ENCODE measurements at regions of chr3 and their contacts with region 1.

Region 1: DNA sequence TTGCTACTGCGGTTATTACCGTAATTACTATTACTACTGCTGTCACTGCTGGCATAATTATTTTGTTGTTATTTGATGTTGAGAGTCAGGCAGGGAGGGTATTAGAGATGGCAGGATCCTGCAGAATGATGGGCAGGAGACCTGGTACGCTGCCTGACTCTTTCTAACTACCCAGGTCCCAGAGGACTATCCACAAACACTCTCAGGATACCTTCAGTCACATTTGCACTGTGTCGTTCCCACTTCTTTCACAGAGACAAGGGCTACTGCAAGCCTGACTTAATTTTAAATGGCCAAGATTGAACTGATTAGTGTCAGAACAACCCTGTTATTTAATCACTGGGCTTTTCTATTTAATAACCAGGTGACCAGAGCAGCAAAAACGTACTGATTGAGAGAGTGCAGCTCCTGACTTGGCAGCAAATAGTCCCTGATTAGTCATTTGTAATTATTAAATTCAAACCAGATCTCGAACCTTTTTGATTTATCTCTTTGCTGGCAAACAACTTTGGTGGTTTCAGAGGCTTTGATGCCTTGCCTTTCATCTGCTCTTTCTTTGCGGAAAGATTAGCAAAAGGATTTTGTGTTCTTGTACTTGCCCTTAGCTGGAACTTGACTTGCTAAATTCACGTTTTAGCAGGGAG is 88.8 kb upstream of the ARHGEF3 start:
- DNase-seq: no peak
- ATAC-seq: no peak
- H3K4me3 ChIP-seq: no peak overlapping the region
- H3K27ac ChIP-seq: no peak overlapping the region
- H3K4me1 ChIP-seq: no peaks in the 10 kb centered on the region; the same call in 1 of the 2 replicates
- H3K27me3 ChIP-seq: peaks cover 5% of the 10 kb centered on the region
- CTCF ChIP-seq: no peak
- POLR2A ChIP-seq: no peak
- RAD21 ChIP-seq: no peak

Region 2: GRCh38 chr3:56711344-56711743 is 179.2 kb before region 1 on chr3:
- CTCF ChIA-PET with region 1: interaction called, 10 read pairs
- POLR2A ChIA-PET with region 1: no interaction called
- dilution Hi-C with region 1: no loop called
- in situ Hi-C with region 1: no loop called
- intact Hi-C with region 1: no loop called
- DNase-seq: no peak
- ATAC-seq: no peak
- H3K4me3 ChIP-seq: no peak overlapping the region
- H3K27ac ChIP-seq: no peak overlapping the region
- H3K4me1 ChIP-seq: no peaks in the 10 kb centered on the region
- H3K27me3 ChIP-seq: peaks cover 1% of the 10 kb centered on the region; the same call in 1 of the 2 replicates
- CTCF ChIP-seq: no peak
- POLR2A ChIP-seq: no peak
- RAD21 ChIP-seq: no peak

Region 3: GRCh38 chr3:56980798-56981390 is 90.3 kb after region 1 on chr3:
- CTCF ChIA-PET with region 1: no interaction called
- POLR2A ChIA-PET with region 1: no interaction called
- dilution Hi-C with region 1: no loop called
- in situ Hi-C with region 1: no loop called
- intact Hi-C with region 1: no loop called
- DNase-seq: peak; percentile 99
- ATAC-seq: peak; percentile 93
- H3K4me3 ChIP-seq: no peak overlapping the region
- H3K27ac ChIP-seq: peak overlapping the region; percentile 53; the same call in 1 of the 2 replicates
- H3K4me1 ChIP-seq: peaks cover 14% of the 10 kb centered on the region
- H3K27me3 ChIP-seq: no peaks in the 10 kb centered on the region
- CTCF ChIP-seq: no peak
- POLR2A ChIP-seq: no peak
- RAD21 ChIP-seq: no peak